Mammary epithelial cell (primary cell): ENCODE measurements at regions of chr2 and their contacts with region 1.

Region 1: DNA sequence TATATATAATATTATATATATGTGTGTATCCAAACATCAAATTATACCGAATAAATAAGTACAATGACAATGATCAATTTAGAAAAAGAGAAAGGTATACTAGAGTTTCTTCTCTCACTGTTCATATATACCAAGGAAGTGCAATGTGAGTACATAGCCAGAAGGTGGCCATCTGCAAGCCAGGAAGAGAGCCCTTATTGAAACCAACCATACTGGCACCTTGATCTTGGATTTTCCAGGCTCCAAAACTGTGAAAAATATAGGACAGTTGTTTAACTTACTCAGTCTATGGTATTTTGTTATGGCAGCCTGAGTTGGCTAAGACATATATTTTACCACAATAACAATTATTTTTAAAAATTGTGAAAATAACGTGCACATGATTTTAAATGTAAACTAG is 1490.2 kb upstream of the SLC39A10 start:
- DNase-seq: peak; percentile 12
- H3K4me3 ChIP-seq: no peak overlapping the region
- H3K27ac ChIP-seq: no peak overlapping the region
- H3K4me1 ChIP-seq: no peaks in the 10 kb centered on the region
- H3K27me3 ChIP-seq: no peaks in the 10 kb centered on the region
- CTCF ChIP-seq: peak; percentile 51 to 80

Region 2: GRCh38 chr2:194232600-194232999 is 65.8 kb after region 1 on chr2:
- CTCF ChIA-PET with region 1: no interaction called
- dilution Hi-C with region 1: no loop called
- in situ Hi-C with region 1: no loop called
- intact Hi-C with region 1: no loop called
- DNase-seq: no peak
- H3K4me3 ChIP-seq: no peak overlapping the region
- H3K27ac ChIP-seq: no peak overlapping the region
- H3K4me1 ChIP-seq: no peaks in the 10 kb centered on the region
- H3K27me3 ChIP-seq: no peaks in the 10 kb centered on the region
- CTCF ChIP-seq: no peak

Region 3: GRCh38 chr2:194867328-194867727 is 700.5 kb after region 1 on chr2:
- CTCF ChIA-PET with region 1: no interaction called
- dilution Hi-C with region 1: no loop called
- in situ Hi-C with region 1: no loop called
- intact Hi-C with region 1: loop called (anchors 5 kb)
- DNase-seq: peak; percentile 8
- H3K4me3 ChIP-seq: no peak overlapping the region
- H3K27ac ChIP-seq: no peak overlapping the region
- H3K4me1 ChIP-seq: no peaks in the 10 kb centered on the region
- H3K27me3 ChIP-seq: no peaks in the 10 kb centered on the region
- CTCF ChIP-seq: peak; percentile 44 to 62